ENCODE measurements at regions of chr6 and their contacts with region 1.

Region 1: DNA sequence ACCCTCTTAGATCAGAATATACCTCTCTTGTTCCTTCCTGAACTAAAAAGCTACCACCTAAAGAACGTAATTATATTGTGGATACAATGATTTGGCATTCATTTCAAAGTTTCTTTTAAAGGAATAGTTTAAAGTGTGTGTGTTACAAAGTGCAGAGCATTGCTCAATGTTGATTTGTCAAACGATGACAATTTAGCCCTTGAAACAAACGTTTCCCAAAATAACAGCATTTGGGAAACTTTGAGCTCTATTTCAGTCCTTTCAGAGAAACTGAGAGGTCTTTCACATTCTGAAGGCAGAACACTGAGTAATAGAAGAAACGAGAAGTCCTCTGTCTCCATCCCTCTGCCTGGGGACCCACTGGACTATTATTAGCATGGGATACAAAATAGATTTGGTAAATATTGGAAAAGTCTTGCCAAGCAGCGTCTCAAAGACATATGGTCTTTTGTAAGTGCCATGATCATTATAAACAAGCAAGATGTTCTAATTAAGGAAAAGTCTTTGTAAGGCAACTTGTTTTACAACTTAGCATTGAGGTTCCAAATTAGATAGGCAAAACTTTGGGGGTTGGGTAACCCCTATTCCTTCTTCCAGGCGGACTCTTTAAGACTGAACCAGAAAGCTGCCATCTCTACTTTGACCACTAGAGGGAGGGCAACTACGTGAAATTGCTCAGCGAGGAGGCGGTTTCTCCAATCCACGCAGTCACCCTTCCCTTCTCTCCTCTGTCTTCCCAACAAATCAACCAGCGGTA is 208.8 kb downstream of the RNF144B start:
- DNase-seq: no peak
- H3K4me3 Mint-ChIP-seq: no peak overlapping the region
- H3K27ac Mint-ChIP-seq: no peak overlapping the region
- H3K4me1 Mint-ChIP-seq: no peaks in the 10 kb centered on the region
- H3K27me3 Mint-ChIP-seq: peaks cover 2% of the 10 kb centered on the region

Region 2: GRCh38 chr6:18536663-18537062 is 59.3 kb before region 1 on chr6:
- intact Hi-C with region 1: no loop called
- DNase-seq: no peak
- H3K4me3 Mint-ChIP-seq: no peak overlapping the region
- H3K27ac Mint-ChIP-seq: no peak overlapping the region
- H3K4me1 Mint-ChIP-seq: no peaks in the 10 kb centered on the region
- H3K27me3 Mint-ChIP-seq: peaks cover 7% of the 10 kb centered on the region

Region 3: GRCh38 chr6:18823782-18824386 is 227.9 kb after region 1 on chr6:
- intact Hi-C with region 1: loop called (anchors 2 kb)
- DNase-seq: no peak
- H3K4me3 Mint-ChIP-seq: no peak overlapping the region
- H3K27ac Mint-ChIP-seq: no peak overlapping the region
- H3K4me1 Mint-ChIP-seq: no peaks in the 10 kb centered on the region
- H3K27me3 Mint-ChIP-seq: no peaks in the 10 kb centered on the region

Region 4: DNA sequence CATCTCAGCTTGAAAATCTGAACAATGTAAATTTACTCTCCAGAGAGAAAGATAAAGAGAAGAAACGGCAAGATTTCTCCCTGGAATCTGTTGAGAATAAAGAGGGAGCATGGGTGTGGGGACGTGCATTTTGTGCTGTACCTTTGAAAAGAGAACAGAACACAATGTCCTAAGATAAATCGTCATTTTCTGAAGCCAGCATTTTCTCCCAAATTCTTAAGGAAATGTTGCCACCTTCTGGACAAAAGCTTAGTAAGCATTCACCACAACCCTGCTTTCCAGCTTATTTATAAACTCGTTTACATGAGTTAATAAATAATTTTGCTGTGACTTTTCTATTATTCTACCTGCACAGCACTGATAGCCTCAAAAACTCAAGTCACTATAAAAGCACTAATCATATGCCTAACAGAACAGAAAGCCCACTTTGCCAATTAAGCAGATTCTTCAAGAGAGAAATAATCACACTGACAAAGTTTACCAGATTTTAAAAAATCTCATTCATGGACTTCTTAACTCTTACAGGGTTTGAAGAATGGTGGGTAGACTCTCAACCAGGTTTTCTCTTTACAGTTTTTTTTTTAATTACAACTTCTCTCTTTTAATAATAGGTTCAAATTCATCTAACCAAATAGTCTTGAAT is 1460.5 kb after region 1 on chr6:
- intact Hi-C with region 1: loop called (anchors 10 kb)
- DNase-seq: no peak
- H3K4me3 Mint-ChIP-seq: no peak overlapping the region
- H3K27ac Mint-ChIP-seq: no peak overlapping the region
- H3K4me1 Mint-ChIP-seq: peaks cover 11% of the 10 kb centered on the region
- H3K27me3 Mint-ChIP-seq: no peaks in the 10 kb centered on the region

Measured in activated T-helper 2 cell treated with anti-CD3 and anti-CD28 coated beads, Interferon-gamma antibody, Interleukin-2, Interleukin-4, amounts not matched to agents 10 μg/mL and 5 μg/mL and 100 μg/mL, durations not matched to agents 14 hours and 24 hours and 36 hours (primary cell).